ENCODE measurements at regions of chr20 and their contacts with region 1.

Region 1: DNA sequence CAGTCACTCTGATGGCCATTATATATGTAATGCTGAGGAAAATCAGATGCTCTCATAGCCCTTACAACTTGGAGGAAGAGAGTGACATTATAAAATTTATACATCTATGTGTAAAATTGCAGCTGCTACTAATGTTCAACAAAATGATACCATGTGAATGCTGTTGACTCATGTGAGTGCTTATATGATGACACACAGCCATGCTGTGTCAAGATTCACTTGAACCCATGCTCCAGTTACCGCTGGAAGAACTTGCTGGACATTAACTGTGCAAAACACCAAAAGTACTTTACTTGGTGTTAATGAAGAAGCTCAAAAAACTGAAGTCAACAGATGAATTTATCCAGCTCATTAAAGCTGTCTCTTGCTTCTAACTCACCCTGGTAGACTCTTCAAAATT is 318.9 kb upstream of the PLCB4 start:
- DNase-seq: no peak
- H3K4me3 Mint-ChIP-seq: no peak overlapping the region
- H3K27ac Mint-ChIP-seq: no peak overlapping the region
- H3K4me1 Mint-ChIP-seq: peaks cover 5% of the 10 kb centered on the region
- H3K27me3 Mint-ChIP-seq: no peaks in the 10 kb centered on the region
- CTCF ChIP-seq: no peak

Region 2: DNA sequence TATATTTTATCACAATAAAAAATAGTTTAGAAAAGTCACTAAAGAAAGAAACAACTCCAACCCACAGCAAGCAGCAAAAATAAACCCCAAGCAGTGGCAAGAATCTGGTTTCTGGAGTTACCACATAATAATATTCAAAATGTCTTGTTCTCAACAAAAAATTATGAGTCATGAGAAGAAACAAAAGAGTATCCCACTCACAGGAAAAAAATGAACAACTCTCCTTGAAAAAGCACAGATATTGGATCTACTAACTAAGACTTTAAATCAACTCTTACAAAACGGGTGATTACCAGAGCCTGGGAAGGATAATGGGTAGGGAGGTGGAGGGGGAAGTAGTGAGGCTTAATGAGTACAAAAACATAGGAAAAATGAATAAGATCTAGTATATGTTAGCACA is 192.3 kb before region 1 on chr20:
- CTCF ChIA-PET with region 1: no interaction called
- POLR2A ChIA-PET with region 1: no interaction called
- intact Hi-C with region 1: no loop called
- DNase-seq: no peak
- H3K4me3 Mint-ChIP-seq: no peak overlapping the region
- H3K27ac Mint-ChIP-seq: no peak overlapping the region
- H3K4me1 Mint-ChIP-seq: no peaks in the 10 kb centered on the region
- H3K27me3 Mint-ChIP-seq: no peaks in the 10 kb centered on the region
- CTCF ChIP-seq: no peak

Region 3: DNA sequence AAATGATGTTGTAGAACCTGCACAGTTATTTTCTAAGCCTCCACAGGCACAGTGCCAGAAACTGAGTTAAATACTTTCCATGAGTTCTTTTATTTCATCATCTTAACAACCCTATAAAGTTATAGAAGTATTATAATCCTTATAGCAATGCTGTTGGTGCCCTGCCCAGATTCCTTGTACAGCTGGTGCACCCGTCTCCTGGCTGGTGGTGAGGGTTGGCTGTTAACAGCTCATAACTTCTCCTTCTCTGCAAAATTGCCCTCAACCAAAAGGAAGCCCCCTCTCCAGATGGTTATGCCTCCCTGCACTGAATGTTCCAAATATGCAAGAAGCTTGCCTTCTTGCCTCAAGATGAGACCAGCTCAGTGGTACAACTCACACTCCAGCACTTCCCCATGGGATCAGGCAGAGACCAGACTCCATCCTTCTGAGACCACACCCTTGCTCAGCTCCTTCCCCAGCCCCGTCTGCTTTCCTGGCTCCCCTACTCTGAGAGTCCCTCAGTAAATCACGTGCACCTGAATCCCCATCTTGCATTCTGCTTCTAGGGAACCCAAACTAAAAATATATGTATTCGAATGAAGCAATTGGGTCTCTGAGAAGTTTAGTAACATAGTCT is 14.5 kb after region 1 on chr20:
- CTCF ChIA-PET with region 1: interaction called, 47 read pairs
- POLR2A ChIA-PET with region 1: interaction called, 3 read pairs
- intact Hi-C with region 1: no loop called
- DNase-seq: peak; percentile 67
- H3K4me3 Mint-ChIP-seq: no peak overlapping the region
- H3K27ac Mint-ChIP-seq: no peak overlapping the region
- H3K4me1 Mint-ChIP-seq: peaks cover 7% of the 10 kb centered on the region
- H3K27me3 Mint-ChIP-seq: no peaks in the 10 kb centered on the region
- CTCF ChIP-seq: no peak

Region 4: GRCh38 chr20:8790442-8791074 is 40.6 kb after region 1 on chr20:
- CTCF ChIA-PET with region 1: interaction called, 6 read pairs
- POLR2A ChIA-PET with region 1: no interaction called
- intact Hi-C with region 1: loop called (anchors 2 kb)
- DNase-seq: peak; percentile 69
- H3K4me3 Mint-ChIP-seq: no peak overlapping the region
- H3K27ac Mint-ChIP-seq: no peak overlapping the region
- H3K4me1 Mint-ChIP-seq: no peaks in the 10 kb centered on the region
- H3K27me3 Mint-ChIP-seq: peaks cover 26% of the 10 kb centered on the region
- CTCF ChIP-seq: peak; percentile 95

Measured in MCF 10A (cell line).